ENCODE measurements at regions of chr2 and their contacts with region 1.

Region 1: DNA sequence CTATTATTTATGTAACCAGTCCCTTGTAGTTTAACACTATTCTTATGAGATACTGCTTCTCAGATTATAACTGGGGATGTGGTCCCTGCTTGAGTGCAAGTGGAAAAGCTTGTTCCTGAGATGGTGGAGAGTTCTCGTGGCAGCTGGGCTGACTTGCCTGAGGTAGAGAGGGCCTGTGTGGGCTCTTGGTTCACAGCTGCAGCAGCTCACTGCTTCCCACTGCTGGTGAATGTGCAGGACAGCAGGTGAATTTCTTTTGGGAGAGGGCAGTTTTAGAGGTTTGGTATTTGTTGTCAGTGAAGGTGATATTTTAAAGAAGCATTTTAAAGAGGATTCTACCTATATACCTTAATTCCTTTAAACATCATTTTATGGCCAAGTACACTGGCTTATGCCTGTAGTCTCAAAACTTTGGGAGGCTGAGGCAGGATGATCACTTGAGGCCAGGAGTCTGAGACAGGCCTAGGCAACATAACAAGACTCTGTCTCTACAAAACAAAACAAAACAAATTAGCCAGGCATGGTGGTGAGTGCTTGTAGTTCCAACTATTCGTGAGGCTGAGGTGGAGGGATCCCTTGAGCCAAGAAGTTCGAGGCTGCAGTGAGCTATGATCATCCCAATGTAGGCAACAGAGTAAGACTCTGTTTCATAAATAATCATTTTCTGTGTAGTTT is 94.8 kb downstream of the MTA3 start:
- DNase-seq: peak; percentile 65
- H3K4me3 Mint-ChIP-seq: no peak overlapping the region
- H3K27ac Mint-ChIP-seq: no peak overlapping the region
- H3K4me1 Mint-ChIP-seq: no peaks in the 10 kb centered on the region
- H3K27me3 Mint-ChIP-seq: no peaks in the 10 kb centered on the region

Region 2: DNA sequence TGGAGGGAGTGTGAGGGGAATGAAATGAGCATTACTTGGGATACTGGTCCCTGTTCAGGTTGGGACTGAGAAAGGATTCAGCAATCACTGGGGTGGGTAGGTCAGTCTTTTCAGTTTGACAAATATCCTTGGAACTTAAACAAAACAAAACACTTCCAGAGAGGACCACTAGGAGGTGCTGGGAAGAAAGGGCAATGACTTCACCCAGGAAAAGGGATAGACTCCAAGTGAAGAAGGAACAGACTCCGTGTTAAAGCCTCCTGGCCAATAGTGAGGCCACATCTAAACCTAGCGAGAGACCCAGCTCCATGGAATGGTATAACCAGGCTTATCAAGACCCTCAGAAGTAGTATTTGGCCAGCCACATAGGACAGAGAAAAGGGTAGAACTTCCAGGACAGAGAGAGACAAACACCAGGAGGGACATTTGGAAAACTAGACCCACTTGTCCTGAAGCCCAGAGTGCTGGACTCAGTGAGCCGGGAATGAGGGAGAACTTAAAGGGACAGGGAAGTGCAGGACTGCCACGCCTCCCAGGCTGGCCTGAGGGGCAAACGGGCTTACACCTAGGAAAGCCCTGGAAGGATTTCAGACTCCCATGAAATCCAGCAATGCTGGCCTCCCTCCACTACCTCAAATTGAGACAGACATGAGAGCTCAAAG is 149.9 kb before region 1 on chr2:
- CTCF ChIA-PET with region 1: interaction called, 11 read pairs
- POLR2A ChIA-PET with region 1: no interaction called
- intact Hi-C with region 1: loop called (anchors 1 kb)
- DNase-seq: no peak
- H3K4me3 Mint-ChIP-seq: no peak overlapping the region
- H3K27ac Mint-ChIP-seq: no peak overlapping the region
- H3K4me1 Mint-ChIP-seq: peaks cover 7% of the 10 kb centered on the region
- H3K27me3 Mint-ChIP-seq: peaks cover 2% of the 10 kb centered on the region

Region 3: DNA sequence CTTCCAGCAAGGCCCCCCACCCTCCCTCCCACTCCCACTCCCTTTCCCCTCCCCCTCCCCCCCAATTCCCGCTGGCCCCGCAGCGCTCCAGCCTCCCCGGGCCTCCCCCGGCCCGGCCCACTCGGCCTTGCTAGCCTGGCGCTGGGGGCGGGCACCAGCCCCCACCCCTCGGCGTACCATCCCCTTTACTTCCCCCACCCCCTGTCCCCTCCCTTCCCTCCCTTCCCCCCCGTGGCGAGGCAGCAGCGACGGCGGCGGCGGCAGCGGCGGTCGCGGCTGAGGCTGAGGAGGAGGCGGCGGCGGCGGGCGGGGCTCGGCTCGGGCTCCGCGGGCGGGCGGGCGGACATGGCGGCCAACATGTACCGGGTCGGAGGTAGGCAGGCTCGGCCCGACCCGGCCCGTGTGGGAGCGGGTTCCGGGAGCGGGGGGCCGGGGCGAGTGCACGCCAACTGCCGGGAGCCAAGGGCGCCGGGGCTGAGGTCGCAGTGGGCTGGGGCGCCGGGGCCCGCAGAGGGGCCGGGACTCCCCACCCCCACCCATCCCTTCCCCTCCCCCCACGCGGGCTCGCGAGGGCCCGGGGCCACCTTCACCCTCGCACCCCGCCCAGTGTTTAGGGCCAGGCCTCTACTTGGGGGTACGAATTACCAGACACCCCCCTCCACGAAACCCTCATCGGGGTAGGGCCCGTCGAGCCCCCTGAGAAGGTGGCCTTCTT is 94.7 kb before region 1 on chr2 and contains the start of gene MTA3:
- CTCF ChIA-PET with region 1: no interaction called
- POLR2A ChIA-PET with region 1: no interaction called
- intact Hi-C with region 1: loop called (anchors 10 kb)
- DNase-seq: peak; percentile 73
- H3K4me3 Mint-ChIP-seq: peak within 1 kb of the TSS; percentile 79
- H3K27ac Mint-ChIP-seq: peak within 1 kb of the TSS; percentile 82
- H3K4me1 Mint-ChIP-seq: peaks cover 10% of the 10 kb centered on the region
- H3K27me3 Mint-ChIP-seq: no peaks in the 10 kb centered on the region
- total RNA-seq, gene MTA3: 25.1 to 29.7 TPM

Region 4: DNA sequence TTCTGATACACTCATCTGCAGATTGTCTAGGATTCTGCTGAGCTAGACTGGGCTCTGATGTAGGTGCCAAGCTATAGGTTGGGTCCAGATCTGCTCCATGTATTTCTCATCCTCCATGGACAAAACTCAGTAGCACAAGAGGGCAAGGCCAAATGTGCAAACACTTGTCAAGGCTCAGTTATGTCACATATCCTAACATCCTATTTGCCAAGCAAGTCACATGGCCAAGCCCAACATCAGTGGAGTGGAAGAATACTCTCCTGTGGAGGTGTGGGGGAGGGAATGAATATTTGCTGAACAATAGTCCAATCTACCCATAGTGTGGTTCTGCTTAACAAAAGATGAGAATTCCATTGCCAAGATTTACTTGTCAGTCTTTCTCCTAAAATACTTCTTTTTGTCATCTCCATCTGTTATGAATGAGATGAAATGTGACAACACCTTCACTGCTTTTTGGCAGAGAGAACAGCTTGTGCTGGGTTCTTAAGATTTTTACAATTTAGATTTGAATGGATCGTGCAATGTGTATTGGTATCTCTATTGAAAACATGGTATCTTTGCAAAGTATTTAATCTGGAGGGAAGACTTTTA is 10.8 kb after region 1 on chr2:
- CTCF ChIA-PET with region 1: interaction called, 13 read pairs
- POLR2A ChIA-PET with region 1: no interaction called
- intact Hi-C with region 1: no loop called
- DNase-seq: no peak
- H3K4me3 Mint-ChIP-seq: no peak overlapping the region
- H3K27ac Mint-ChIP-seq: no peak overlapping the region
- H3K4me1 Mint-ChIP-seq: no peaks in the 10 kb centered on the region
- H3K27me3 Mint-ChIP-seq: no peaks in the 10 kb centered on the region

Region 5: GRCh38 chr2:42696987-42697386 is 33.7 kb after region 1 on chr2:
- CTCF ChIA-PET with region 1: no interaction called
- POLR2A ChIA-PET with region 1: no interaction called
- intact Hi-C with region 1: no loop called
- DNase-seq: no peak
- H3K4me3 Mint-ChIP-seq: no peak overlapping the region
- H3K27ac Mint-ChIP-seq: no peak overlapping the region
- H3K4me1 Mint-ChIP-seq: no peaks in the 10 kb centered on the region
- H3K27me3 Mint-ChIP-seq: no peaks in the 10 kb centered on the region

Measured in activated CD4-positive, alpha-beta memory T cell treated with anti-CD3 and anti-CD28 coated beads for 36 hours (primary cell).